Sigmoid colon (tissue), 7 donors: ENCODE measurements at regions of chr6 and their contacts with region 1.

Region 1: GRCh38 chr6:109073344-109074132 is 21.1 kb downstream of the SESN1 start:
- DNase-seq: no peak
- H3K4me3 ChIP-seq: no peak overlapping the region
- H3K27ac ChIP-seq: peak overlapping the region in 1 of 4 donors; percentile 8
- H3K4me1 ChIP-seq: peaks cover 0 to 48% (median 19%) of the 10 kb centered on the region in 4 donors
- H3K27me3 ChIP-seq: no peaks in the 10 kb centered on the region
- CTCF ChIP-seq: peak; percentile 45 to 63 (median 56)
- EP300 ChIP-seq: peak in 1 of 4 donors; percentile 16
- POLR2A ChIP-seq: no peak

Region 2: GRCh38 chr6:108541838-108542759 is 531.4 kb before region 1 on chr6:
- intact Hi-C with region 1: loop called (anchors 2 kb)
- DNase-seq: peak; percentile 84
- H3K4me3 ChIP-seq: no peak overlapping the region
- H3K27ac ChIP-seq: no peak overlapping the region
- H3K4me1 ChIP-seq: peaks cover 0 to 16% (median 5%) of the 10 kb centered on the region in 4 donors
- H3K27me3 ChIP-seq: no peaks in the 10 kb centered on the region
- CTCF ChIP-seq: peak; percentile 73 to 94 (median 93)
- EP300 ChIP-seq: no peak
- POLR2A ChIP-seq: no peak

Region 3: DNA sequence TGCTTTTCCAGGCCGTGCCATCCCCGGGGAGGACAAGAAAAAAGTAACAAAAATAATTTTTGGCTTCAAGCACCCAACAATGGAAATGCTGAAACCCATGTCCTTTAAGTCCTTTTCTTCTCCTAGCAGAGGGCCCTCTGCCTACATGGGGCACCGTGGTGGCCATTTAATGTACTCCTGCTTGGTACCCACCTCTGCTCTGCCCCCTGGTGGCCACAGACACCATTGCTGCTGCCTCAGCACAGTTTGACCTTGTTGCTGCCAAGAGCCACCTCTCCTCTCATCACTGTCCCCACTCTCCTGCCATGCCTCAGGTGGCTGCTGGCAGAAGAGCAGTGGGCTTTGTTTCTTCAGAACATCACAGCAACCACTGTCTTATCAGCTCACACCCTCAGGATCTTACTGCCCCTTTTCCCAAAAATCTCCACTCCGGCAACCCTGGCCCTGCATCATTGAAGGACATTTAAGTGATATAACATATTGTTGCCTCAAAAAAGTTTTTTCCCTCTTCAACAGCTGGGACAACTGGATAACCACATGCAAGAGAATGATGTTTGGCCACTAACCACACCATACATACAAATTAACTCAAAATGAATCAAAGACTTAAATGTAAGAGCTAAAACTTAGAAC is 238.2 kb before region 1 on chr6:
- intact Hi-C with region 1: loop called (anchors 5 kb)
- DNase-seq: peak; percentile 94
- H3K4me3 ChIP-seq: no peak overlapping the region
- H3K27ac ChIP-seq: no peak overlapping the region
- H3K4me1 ChIP-seq: peaks cover 0 to 15% (median 0%) of the 10 kb centered on the region in 4 donors
- H3K27me3 ChIP-seq: no peaks in the 10 kb centered on the region
- CTCF ChIP-seq: peak; percentile 91 to 99 (median 95)
- EP300 ChIP-seq: no peak
- POLR2A ChIP-seq: no peak

Region 4: GRCh38 chr6:108914235-108915022 is 159.1 kb before region 1 on chr6:
- intact Hi-C with region 1: loop called (anchors 5 kb)
- DNase-seq: no peak
- H3K4me3 ChIP-seq: no peak overlapping the region
- H3K27ac ChIP-seq: peak overlapping the region in 3 of 4 donors; percentile 26 to 47 (median 36)
- H3K4me1 ChIP-seq: peaks cover 0 to 7% (median 3%) of the 10 kb centered on the region in 4 donors
- H3K27me3 ChIP-seq: no peaks in the 10 kb centered on the region
- CTCF ChIP-seq: peak in 1 of 4 experiments; percentile 34
- EP300 ChIP-seq: no peak
- POLR2A ChIP-seq: no peak

Region 5: DNA sequence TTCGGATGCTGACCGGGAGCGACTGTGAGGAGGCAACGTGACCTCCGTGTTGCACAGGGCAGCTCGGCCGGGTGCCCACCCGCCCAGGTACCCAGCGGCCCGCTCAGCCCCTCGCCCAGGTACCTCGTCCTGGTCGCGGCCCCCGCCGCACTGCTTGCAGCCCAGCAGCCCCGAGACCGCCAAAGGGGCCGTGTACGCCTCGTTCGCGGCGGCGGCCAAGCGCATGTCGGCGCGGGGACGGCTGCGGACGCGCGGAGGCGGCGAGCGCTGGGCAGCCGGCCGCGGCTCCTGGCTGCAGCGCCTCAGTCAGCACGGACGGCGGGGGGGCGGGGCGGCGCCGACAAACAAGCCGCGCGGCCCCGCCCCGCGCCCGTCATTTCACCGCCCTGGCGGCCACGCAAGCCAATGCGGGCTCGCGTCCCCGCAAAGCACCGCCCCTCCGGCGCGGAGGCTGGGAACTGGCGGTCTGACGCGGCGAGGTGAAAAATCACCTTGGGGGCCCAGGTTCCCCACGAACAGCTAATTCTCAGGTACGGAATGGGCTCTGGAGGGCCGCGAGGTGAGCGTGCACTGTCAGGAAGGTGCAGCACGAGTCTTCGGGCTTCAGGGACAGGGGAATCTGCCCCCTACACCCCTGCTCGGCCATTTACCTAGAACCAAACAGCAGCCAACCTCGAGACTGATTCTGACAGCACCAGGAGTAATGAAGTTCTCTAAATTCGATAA is 64.1 kb before region 1 on chr6:
- intact Hi-C with region 1: loop called (anchors 2 kb)
- DNase-seq: peak; percentile 97
- H3K4me3 ChIP-seq: peak overlapping the region; percentile 93 to 98 (median 97)
- H3K27ac ChIP-seq: peak overlapping the region; percentile 92 to 98 (median 96)
- H3K4me1 ChIP-seq: peaks cover 0 to 47% (median 35%) of the 10 kb centered on the region in 4 donors
- H3K27me3 ChIP-seq: no peaks in the 10 kb centered on the region
- CTCF ChIP-seq: peak in 1 of 4 experiments; percentile 27
- EP300 ChIP-seq: no peak
- POLR2A ChIP-seq: peak; percentile 59 to 63

Region 6: GRCh38 chr6:109024784-109025183 is 48.8 kb before region 1 on chr6:
- intact Hi-C with region 1: no loop called
- DNase-seq: no peak
- H3K4me3 ChIP-seq: no peak overlapping the region
- H3K27ac ChIP-seq: no peak overlapping the region
- H3K4me1 ChIP-seq: peaks cover 0 to 11% (median 5%) of the 10 kb centered on the region in 4 donors
- H3K27me3 ChIP-seq: no peaks in the 10 kb centered on the region
- CTCF ChIP-seq: no peak
- EP300 ChIP-seq: no peak
- POLR2A ChIP-seq: no peak